ENCODE measurements at regions of chr5 and their contacts with region 1.

Region 1: DNA sequence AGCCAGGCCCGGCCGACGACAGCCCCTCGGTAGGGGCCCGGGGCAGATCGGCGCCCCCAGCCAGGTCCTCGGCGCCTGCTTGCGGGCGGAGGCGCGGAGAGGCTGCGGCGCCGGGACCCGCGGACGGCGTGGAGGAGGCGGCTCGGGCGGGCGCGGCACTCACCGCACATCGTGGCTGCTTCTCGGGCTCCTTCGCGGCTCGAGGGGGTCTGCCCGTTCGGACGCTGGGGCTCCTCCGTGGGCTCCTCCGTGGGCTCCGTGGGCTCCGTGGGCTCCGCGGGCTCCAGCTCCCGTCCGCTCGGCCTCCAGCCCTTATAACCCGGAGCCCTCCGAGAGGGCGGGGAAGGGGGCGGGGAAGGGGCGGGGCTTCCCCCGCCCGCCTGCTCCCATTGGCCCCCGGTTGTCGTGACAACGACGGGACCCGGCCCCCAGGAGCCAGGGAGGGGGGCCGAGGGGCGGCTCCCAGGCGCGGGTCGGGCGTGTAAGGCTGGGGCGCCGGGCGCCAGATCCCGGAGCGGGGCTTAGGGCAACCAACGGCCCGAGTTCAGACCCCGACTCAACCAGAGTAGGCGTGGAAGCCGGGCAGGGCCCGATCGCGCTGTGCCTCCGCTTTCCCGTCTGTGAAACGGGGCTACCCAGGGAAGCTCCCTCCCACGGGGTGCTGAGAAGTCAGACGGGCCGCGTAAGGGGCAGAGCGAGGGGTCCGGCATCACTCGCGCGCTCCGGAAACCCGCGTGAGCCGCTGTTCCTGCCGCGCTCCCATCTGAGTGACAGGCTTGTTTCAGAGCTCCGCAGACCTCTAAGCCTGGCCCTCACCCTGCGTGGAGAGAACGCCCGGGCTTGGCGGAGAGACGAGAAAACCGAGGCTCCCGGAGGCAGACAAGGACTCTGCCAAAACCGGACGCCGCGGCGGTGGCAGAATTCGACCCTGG is at the start of gene GFPT2:
- DNase-seq: peak; percentile 83
- ATAC-seq: peak; percentile 93
- H3K4me3 ChIP-seq: peak within 1 kb of the TSS; percentile 41 to 79 (median 65)
- H3K4me3 Mint-ChIP-seq: peak within 1 kb of the TSS; percentile 74
- H3K27ac ChIP-seq: no peak within 1 kb of the TSS
- H3K27ac Mint-ChIP-seq: no peak within 1 kb of the TSS
- H3K4me1 ChIP-seq: peaks cover 21 to 23% of the 10 kb centered on the region in 2 donors
- H3K4me1 Mint-ChIP-seq: peaks cover 9% of the 10 kb centered on the region
- H3K27me3 ChIP-seq: peaks cover 0 to 57% (median 27%) of the 10 kb centered on the region in 4 experiments
- H3K27me3 Mint-ChIP-seq: peaks cover 47% of the 10 kb centered on the region
- CTCF ChIP-seq: no peak
- total RNA-seq, gene GFPT2: 1.6 and 2.8 TPM in 2 replicates

Region 2: DNA sequence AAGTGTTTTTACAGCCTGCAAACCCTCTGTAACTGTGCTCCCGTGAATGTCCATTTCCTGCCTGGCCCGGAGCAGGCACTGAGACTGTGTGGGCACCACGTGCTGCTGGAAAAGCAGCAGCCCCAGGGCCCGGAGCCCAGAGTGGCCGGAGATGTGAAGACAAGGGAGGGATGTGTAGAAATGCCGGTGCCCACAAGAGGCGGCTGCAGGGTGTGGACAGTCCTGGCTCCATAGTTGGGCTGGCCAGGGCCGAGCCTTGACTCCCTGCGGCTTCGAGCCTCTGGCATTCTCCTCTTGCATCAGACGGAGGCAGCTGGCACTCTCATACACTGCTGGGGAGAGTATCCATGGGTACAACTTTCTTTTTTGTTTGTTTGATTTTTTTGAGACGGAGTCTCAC is 13.0 kb after region 1 on chr5:
- CTCF ChIA-PET with region 1: no interaction called
- POLR2A ChIA-PET with region 1: no interaction called
- intact Hi-C with region 1: no loop called
- DNase-seq: no peak
- ATAC-seq: no peak
- H3K4me3 ChIP-seq: no peak overlapping the region
- H3K4me3 Mint-ChIP-seq: no peak overlapping the region
- H3K27ac ChIP-seq: no peak overlapping the region
- H3K27ac Mint-ChIP-seq: no peak overlapping the region
- H3K4me1 ChIP-seq: no peaks in the 10 kb centered on the region
- H3K4me1 Mint-ChIP-seq: no peaks in the 10 kb centered on the region
- H3K27me3 ChIP-seq: peaks cover 0 to 5% (median 0%) of the 10 kb centered on the region in 4 experiments
- H3K27me3 Mint-ChIP-seq: peaks cover 3% of the 10 kb centered on the region
- CTCF ChIP-seq: no peak

Region 3: GRCh38 chr5:180390441-180391190 is 37.3 kb after region 1 on chr5:
- CTCF ChIA-PET with region 1: no interaction called
- POLR2A ChIA-PET with region 1: no interaction called
- intact Hi-C with region 1: no loop called
- DNase-seq: no peak
- ATAC-seq: no peak
- H3K4me3 ChIP-seq: no peak overlapping the region
- H3K4me3 Mint-ChIP-seq: no peak overlapping the region
- H3K27ac ChIP-seq: no peak overlapping the region
- H3K27ac Mint-ChIP-seq: no peak overlapping the region
- H3K4me1 ChIP-seq: no peaks in the 10 kb centered on the region
- H3K4me1 Mint-ChIP-seq: no peaks in the 10 kb centered on the region
- H3K27me3 ChIP-seq: no peaks in the 10 kb centered on the region
- H3K27me3 Mint-ChIP-seq: peaks cover 3% of the 10 kb centered on the region
- CTCF ChIP-seq: no peak

Region 4: DNA sequence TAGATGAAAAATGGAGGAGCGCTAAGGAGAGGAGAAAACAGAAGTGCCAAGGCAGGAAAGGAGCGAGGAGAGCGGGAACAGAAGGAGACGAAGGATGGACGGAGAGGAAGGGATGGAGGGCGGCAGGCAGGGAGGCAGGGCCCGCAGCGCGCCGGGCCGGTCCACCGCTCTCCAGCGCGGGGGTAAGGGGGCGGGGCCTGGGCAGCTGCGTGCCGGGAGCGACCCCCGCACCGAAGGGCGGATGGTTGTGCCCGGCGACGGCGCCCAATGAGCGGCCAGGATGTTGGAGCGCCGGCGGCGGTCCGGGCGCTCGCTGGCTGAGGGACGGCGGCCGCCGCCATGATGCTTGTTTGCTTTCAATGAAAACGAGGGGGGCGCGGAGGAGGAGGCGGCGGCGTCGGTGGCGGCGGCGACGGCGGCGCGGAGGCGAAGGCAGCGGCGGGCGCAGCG is 140.8 kb after region 1 on chr5 and contains the start of gene CNOT6:
- CTCF ChIA-PET with region 1: no interaction called
- POLR2A ChIA-PET with region 1: no interaction called
- intact Hi-C with region 1: loop called (anchors 2 kb)
- DNase-seq: peak; percentile 97
- ATAC-seq: peak; percentile 92
- H3K4me3 ChIP-seq: peak within 1 kb of the TSS; percentile 63 to 84 (median 81)
- H3K4me3 Mint-ChIP-seq: peak within 1 kb of the TSS; percentile 92
- H3K27ac ChIP-seq: peak within 1 kb of the TSS; percentile 72 to 85
- H3K27ac Mint-ChIP-seq: peak within 1 kb of the TSS; percentile 99
- H3K4me1 ChIP-seq: peaks cover 18 to 19% of the 10 kb centered on the region in 2 donors
- H3K4me1 Mint-ChIP-seq: peaks cover 30% of the 10 kb centered on the region
- H3K27me3 ChIP-seq: no peaks in the 10 kb centered on the region
- H3K27me3 Mint-ChIP-seq: no peaks in the 10 kb centered on the region
- CTCF ChIP-seq: no peak
- total RNA-seq, gene CNOT6: 31.1 and 31.4 TPM in 2 replicates